Left lung (tissue), 14 donors: ENCODE measurements at regions of chr9 and their contacts with region 1.

Region 1: GRCh38 chr9:124708633-124709291 is 62.3 kb downstream of the NR6A1 start:
- DNase-seq: no peak
- ATAC-seq: peak; percentile 45
- H3K4me3 ChIP-seq: no peak overlapping the region
- H3K27ac ChIP-seq: no peak overlapping the region
- H3K4me1 ChIP-seq: peaks cover 0 to 3% of the 10 kb centered on the region in 2 donors
- H3K27me3 ChIP-seq: no peaks in the 10 kb centered on the region
- CTCF ChIP-seq: no peak

Region 2: DNA sequence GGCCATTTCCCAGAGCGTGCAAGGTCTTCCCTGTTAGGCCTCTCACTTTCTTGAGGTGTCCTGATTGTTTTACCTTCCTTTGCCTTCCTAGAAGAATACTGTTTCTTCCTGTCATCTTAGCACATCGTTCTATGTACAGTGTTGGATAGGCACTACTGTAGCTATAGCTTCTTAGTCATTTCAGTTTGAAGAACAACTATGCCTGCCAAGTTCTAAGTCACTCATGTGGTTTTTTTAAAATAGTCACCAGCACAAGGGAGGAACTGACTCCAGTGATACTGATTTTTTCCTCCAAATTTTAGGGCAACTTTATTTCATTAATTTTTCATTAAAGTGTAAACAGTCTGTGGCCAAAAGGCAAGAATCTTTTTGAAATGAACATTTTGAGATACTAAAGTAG is 79.2 kb before region 1 on chr9:
- intact Hi-C with region 1: loop called in 1 of 2 experiments (anchors 5 kb)
- DNase-seq: no peak
- ATAC-seq: peak; percentile 69
- H3K4me3 ChIP-seq: no peak overlapping the region
- H3K27ac ChIP-seq: no peak overlapping the region
- H3K4me1 ChIP-seq: no peaks in the 10 kb centered on the region
- H3K27me3 ChIP-seq: no peaks in the 10 kb centered on the region
- CTCF ChIP-seq: no peak

Region 3: DNA sequence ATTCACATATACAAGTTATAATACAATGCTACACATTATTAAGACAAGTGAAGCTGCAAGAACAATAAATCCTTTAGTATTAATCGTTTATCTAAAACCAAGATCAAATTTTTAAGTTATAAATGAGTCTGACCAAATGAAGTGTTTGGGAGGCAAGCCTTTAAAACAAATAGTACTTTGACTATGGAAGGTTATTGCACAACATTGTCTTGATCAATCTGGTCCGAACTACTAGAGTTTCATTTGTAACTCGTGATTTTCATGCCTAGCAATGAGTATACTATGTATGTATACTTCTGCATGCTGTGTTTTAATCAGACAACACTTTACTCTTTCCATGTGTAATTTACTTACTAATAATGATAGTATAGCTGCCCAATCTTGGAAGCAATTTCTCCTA is 319.3 kb after region 1 on chr9:
- intact Hi-C with region 1: no loop called
- DNase-seq: no peak
- ATAC-seq: no peak
- H3K4me3 ChIP-seq: no peak overlapping the region
- H3K27ac ChIP-seq: no peak overlapping the region
- H3K4me1 ChIP-seq: no peaks in the 10 kb centered on the region
- H3K27me3 ChIP-seq: no peaks in the 10 kb centered on the region
- CTCF ChIP-seq: no peak